Activated T-helper 2 cell treated with anti-CD3 and anti-CD28 coated beads, Interferon-gamma antibody, Interleukin-2, Interleukin-4, amounts not matched to agents 10 μg/mL and 5 μg/mL and 100 μg/mL, durations not matched to agents 14 hours and 24 hours and 36 hours (primary cell): ENCODE measurements at regions of chr12 and their contacts with region 1.

Region 1: DNA sequence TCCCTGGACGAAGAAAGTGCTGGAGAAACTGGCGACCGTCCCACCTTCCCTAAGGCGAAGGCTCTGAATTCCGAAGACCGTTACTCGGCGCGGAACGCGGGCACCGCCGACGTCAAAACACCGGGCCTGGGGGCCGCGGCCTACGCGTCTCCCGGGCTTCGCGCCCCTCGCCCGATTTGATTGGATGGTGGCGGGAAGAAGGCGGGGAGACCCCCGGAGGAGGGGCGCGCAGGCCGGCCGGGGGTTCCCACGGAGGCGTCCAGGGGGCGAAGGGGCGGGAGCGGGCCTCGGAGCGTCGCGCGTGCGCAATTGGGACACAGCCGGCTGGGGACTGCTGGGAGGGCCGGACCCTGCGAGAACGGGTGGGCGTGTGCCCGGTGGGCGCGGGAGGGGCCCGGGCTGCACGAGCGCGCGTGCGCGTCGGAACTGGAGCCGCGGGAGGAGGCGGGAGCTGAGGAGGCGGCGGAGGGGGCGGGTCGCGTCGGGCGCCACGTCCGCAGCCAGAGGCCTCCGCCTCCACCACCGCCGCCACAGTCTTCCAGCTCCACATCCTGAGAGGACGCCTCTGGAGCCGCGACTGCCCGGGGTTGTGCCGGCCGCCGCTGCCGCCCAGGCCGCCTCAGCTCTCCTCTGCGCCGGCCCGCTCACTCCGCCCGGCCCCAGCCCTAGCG is at the start of gene TMEM263:
- DNase-seq: peak; percentile 89
- H3K4me3 Mint-ChIP-seq: peak within 1 kb of the TSS; percentile 93
- H3K27ac Mint-ChIP-seq: peak within 1 kb of the TSS; percentile 93
- H3K4me1 Mint-ChIP-seq: peaks cover 23% of the 10 kb centered on the region
- H3K27me3 Mint-ChIP-seq: peaks cover 4% of the 10 kb centered on the region
- total RNA-seq, gene TMEM263: 30.6 and 31.8 TPM in 2 replicates

Region 2: DNA sequence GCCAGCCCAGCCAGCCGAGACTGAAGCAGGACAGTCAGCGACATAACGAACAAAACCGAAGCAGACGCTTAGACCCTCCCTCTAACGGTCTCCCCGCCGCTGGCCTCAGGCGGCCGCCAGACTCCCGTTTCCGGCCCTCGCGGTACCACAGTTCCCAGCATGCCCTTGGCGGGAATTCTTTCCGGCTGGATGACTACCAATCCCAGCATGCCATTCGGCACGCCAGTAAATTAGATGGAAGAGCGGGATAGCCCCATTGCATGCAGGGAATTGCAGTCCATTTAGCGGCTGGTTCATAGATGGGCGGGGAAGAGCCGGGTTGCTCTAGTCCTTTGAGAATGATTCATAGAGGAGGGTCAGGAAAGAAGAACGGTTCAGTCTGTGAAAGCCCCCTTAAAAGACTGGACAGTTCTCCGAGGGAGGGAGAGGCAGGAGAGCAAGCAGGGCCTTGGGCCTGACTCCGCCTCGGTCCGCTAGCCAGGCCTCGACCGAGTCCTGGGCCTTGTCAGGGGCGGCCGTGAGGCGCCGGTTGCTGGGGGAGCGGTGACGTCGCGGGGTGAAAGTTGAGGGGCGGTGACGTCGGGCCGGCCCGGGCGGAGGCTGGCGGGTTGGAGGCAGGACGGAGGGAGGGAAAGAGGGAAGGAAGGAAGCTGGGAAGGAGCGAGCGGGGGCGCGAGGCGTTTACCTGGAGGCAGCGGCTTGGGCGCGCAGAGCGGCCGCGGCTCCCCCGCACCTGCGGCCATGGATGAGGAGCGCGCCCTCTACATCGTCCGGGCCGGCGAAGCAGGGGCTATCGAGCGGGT is 181.3 kb before region 1 on chr12 and contains the start of gene RIC8B:
- intact Hi-C with region 1: loop called (anchors 1 kb)
- DNase-seq: peak; percentile 76
- H3K4me3 Mint-ChIP-seq: peak within 1 kb of the TSS; percentile 96
- H3K27ac Mint-ChIP-seq: peak within 1 kb of the TSS; percentile 92
- H3K4me1 Mint-ChIP-seq: peaks cover 18% of the 10 kb centered on the region
- H3K27me3 Mint-ChIP-seq: peaks cover 5% of the 10 kb centered on the region
- total RNA-seq, gene RIC8B: 11.4 and 16.4 TPM in 2 replicates

Region 3: GRCh38 chr12:106986625-106987430 is 31.3 kb after region 1 on chr12 and contains the start of gene MTERF2:
- intact Hi-C with region 1: loop called (anchors 2 kb)
- DNase-seq: peak; percentile 63
- H3K4me3 Mint-ChIP-seq: peak within 1 kb of the TSS; percentile 84
- H3K27ac Mint-ChIP-seq: peak within 1 kb of the TSS; percentile 53
- H3K4me1 Mint-ChIP-seq: peaks cover 34% of the 10 kb centered on the region
- H3K27me3 Mint-ChIP-seq: peaks cover 3% of the 10 kb centered on the region
- total RNA-seq, gene MTERF2: 2.3 and 2.4 TPM in 2 replicates

Region 4: DNA sequence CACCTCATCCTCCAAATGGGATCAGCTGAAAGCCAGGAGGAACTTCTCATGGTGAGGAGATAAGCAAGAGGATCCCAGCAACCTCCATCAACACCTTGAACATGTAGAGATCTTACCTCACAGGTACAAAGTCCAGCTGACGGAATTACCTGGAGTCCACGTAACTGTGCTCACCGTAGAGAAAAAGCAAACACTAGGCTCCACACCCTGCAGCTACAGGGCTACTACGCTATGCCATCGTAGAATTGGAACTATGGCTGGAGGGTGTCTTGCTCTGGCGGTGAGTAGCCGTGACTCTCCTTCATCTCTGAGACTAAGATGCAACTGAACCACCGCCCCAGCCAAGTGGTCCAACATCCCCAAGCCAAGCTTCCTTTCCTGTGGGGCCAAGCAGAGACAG is 87.3 kb after region 1 on chr12:
- intact Hi-C with region 1: no loop called
- DNase-seq: no peak
- H3K4me3 Mint-ChIP-seq: no peak overlapping the region
- H3K27ac Mint-ChIP-seq: no peak overlapping the region
- H3K4me1 Mint-ChIP-seq: peaks cover 8% of the 10 kb centered on the region
- H3K27me3 Mint-ChIP-seq: no peaks in the 10 kb centered on the region